Common myeloid progenitor, CD34-positive (primary cell): ENCODE measurements at regions of chr10 and their contacts with region 1.

Region 1: DNA sequence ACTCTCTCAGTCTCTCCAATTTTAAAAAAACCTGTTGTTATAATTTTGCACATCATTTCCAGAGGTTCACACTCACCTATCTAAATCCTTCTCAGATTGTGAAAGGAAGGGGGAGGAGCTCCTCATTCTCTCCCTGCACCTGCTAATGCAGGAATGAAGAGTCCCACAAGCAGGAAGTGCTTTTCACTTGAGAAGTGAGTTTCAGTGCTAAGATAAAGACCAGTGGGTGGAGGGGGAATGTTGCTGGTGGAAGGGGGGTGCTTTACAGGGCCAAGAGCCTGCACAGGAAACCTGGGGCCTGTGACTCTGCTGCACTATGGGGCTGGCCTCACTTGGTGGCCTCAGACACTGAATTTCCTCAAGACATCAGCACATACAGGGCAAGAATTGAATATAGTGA is 176.4 kb downstream of the PTPN20 start:
- DNase-seq: peak; percentile 13 to 63 (median 50)
- H3K4me3 ChIP-seq: no peak overlapping the region
- H3K27ac ChIP-seq: no peak overlapping the region
- H3K4me1 ChIP-seq: peaks cover 0 to 17% (median 13%) of the 10 kb centered on the region in 4 experiments
- H3K27me3 ChIP-seq: no peaks in the 10 kb centered on the region

Region 2: GRCh38 chr10:47076949-47077361 is 10.7 kb before region 1 on chr10:
- CTCF ChIA-PET with region 1: interaction called, 17 read pairs
- POLR2A ChIA-PET with region 1: no interaction called
- DNase-seq: peak; percentile 30 to 37 (median 31)
- H3K4me3 ChIP-seq: no peak overlapping the region
- H3K27ac ChIP-seq: no peak overlapping the region
- H3K4me1 ChIP-seq: peaks cover 0 to 15% (median 4%) of the 10 kb centered on the region in 4 experiments
- H3K27me3 ChIP-seq: no peaks in the 10 kb centered on the region

Region 3: DNA sequence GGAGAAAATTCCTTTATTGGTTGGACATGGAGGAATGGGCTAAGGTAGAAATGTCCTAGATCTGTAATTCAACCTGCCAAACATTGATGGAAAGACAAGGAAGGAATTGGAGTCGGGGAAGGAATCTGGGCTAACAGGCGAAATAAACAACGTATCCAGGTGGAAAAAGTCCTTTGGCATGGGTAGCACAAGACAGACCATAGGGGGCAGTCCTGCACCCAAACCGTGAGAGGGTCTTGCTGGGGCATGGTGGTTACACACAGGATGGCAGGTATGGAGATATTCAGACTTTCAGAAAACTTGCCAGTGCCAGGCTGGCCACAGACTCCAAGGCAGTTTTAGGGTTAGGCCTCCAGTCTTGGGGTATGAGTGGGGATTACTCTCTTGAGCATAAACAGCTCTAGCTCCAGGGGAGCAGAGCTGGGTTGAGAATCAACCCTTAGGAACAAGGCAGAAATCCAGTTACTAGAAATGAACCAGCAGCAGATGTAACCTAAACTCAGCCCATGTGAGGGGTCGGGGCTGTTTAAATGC is 23.7 kb after region 1 on chr10:
- CTCF ChIA-PET with region 1: no interaction called
- POLR2A ChIA-PET with region 1: no interaction called
- DNase-seq: peak in 1 of 3 donors; percentile 7
- H3K4me3 ChIP-seq: no peak overlapping the region
- H3K27ac ChIP-seq: no peak overlapping the region
- H3K4me1 ChIP-seq: peaks cover 7 to 29% (median 10%) of the 10 kb centered on the region in 4 experiments
- H3K27me3 ChIP-seq: no peaks in the 10 kb centered on the region